Right cardiac atrium (tissue), 5 donors: ENCODE measurements at regions of chr11 and their contacts with region 1.

Region 1: GRCh38 chr11:17760102-17761029 is 25.8 kb downstream of the KCNC1 start:
- DNase-seq: peak in 2 of 3 donors; percentile 26 to 65
- ATAC-seq: peak; percentile 80 to 82
- H3K4me3 ChIP-seq: no peak overlapping the region
- H3K27ac ChIP-seq: no peak overlapping the region
- H3K4me1 ChIP-seq: no peaks in the 10 kb centered on the region
- H3K27me3 ChIP-seq: no peaks in the 10 kb centered on the region

Region 2: DNA sequence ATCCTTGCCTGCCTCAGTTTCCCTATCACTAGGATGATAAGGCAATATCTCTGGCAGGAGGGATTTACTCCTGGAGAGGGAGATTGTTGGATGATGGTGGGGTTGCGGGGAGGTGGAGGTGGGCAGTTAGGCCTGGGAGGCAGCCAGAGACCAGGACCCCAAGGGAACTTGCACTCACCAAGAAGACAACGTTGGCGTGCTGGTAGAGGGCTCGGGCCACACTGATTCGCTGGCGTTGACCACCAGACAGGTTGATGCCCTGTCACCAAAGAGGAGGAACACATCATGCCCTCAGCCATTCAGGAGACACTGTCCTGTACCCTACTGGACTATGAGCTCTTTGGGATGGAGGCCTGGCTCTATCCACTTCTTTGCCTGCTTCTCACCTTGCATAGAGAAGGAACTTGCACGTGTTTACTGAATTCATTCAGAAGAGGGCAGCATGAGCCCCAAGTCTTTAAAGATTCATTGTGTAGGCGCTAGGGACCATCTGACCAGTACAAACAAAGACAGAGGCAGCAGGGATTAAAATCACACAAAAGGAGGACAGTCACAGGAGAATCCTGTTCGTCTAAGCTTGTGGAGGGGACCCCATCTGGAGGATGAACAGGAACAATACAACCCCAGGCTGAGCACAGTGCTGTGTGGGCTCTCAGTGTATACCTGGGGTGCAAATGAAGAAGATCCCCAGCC is 347.7 kb before region 1 on chr11:
- intact Hi-C with region 1: no loop called
- DNase-seq: no peak
- ATAC-seq: no peak
- H3K4me3 ChIP-seq: no peak overlapping the region
- H3K27ac ChIP-seq: no peak overlapping the region
- H3K4me1 ChIP-seq: no peaks in the 10 kb centered on the region
- H3K27me3 ChIP-seq: no peaks in the 10 kb centered on the region

Region 3: GRCh38 chr11:17827006-17827405 is 66.6 kb after region 1 on chr11:
- intact Hi-C with region 1: loop called in 1 of 4 experiments (anchors 10 kb)
- DNase-seq: no peak
- ATAC-seq: no peak
- H3K4me3 ChIP-seq: no peak overlapping the region
- H3K27ac ChIP-seq: no peak overlapping the region
- H3K4me1 ChIP-seq: peaks cover 3% of the 10 kb centered on the region
- H3K27me3 ChIP-seq: no peaks in the 10 kb centered on the region

Region 4: GRCh38 chr11:17846852-17847453 is 86.6 kb after region 1 on chr11:
- intact Hi-C with region 1: loop called in 1 of 4 experiments (anchors 10 kb)
- DNase-seq: peak in 2 of 3 donors; percentile 20 to 34
- ATAC-seq: peak; percentile 39 to 49
- H3K4me3 ChIP-seq: no peak overlapping the region
- H3K27ac ChIP-seq: no peak overlapping the region
- H3K4me1 ChIP-seq: no peaks in the 10 kb centered on the region
- H3K27me3 ChIP-seq: no peaks in the 10 kb centered on the region